Calu3 (cell line): ENCODE measurements at regions of chr18 and their contacts with region 1.

Region 1: DNA sequence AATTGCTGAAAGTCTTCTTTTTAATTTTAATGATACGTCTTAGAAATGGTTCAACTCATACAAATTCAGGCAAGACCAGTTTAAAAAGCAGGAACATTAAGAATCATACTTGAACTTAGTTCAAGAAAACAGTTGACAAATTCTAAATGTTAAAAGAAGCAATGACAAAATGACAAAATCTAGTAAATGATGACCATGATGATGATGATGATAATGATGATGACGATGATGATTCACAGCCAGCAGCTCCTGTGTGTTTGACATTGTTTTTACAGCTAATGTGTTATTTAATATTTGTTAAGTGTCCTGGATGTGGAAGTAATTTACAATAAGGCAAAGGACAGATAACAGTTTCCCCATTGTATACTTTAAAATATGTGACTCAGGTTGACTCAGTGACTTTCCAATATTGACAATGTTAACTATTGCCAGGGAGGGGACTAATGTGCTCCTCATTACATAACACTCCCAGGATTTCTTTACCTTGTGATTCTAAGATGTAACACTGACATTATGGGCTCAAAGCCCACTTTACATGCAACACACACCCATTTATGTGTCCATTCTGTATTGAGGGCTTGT is 602.2 kb downstream of the FBXO15 start:
- DNase-seq: peak; percentile 8
- H3K4me3 Mint-ChIP-seq: no peak overlapping the region
- H3K27ac Mint-ChIP-seq: peak overlapping the region; percentile 92
- H3K4me1 Mint-ChIP-seq: peaks cover 31% of the 10 kb centered on the region
- H3K27me3 Mint-ChIP-seq: no peaks in the 10 kb centered on the region
- CTCF ChIP-seq: no peak

Region 2: GRCh38 chr18:73340135-73340934 is 205.1 kb before region 1 on chr18:
- CTCF ChIA-PET with region 1: no interaction called
- intact Hi-C with region 1: loop called (anchors 1 kb)
- DNase-seq: peak; percentile 65
- H3K4me3 Mint-ChIP-seq: peak overlapping the region; percentile 64
- H3K27ac Mint-ChIP-seq: peak overlapping the region; percentile 94
- H3K4me1 Mint-ChIP-seq: peaks cover 28% of the 10 kb centered on the region
- H3K27me3 Mint-ChIP-seq: no peaks in the 10 kb centered on the region
- CTCF ChIP-seq: no peak

Region 3: GRCh38 chr18:73446502-73446901 is 98.9 kb before region 1 on chr18:
- CTCF ChIA-PET with region 1: no interaction called
- intact Hi-C with region 1: no loop called
- DNase-seq: no peak
- H3K4me3 Mint-ChIP-seq: no peak overlapping the region
- H3K27ac Mint-ChIP-seq: no peak overlapping the region
- H3K4me1 Mint-ChIP-seq: no peaks in the 10 kb centered on the region
- H3K27me3 Mint-ChIP-seq: no peaks in the 10 kb centered on the region
- CTCF ChIP-seq: no peak

Region 4: DNA sequence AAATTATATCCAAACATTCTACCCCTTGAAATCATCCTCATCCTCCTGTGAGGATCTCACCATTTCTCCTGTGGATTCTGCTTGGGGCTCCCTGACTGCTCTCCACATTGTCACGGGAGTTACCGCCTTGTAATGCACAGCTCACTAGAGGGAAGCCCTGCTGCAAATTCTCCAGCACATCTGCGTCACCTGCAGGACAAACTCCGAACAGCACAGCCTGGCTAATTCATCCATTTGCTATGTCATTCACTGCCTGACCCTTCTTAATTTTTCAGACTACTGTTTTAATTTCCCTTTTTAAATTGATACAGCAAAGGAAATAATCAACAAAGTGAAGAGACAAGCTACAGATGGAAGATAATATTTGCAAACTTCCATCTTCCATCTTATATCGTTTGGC is 25.2 kb before region 1 on chr18:
- CTCF ChIA-PET with region 1: no interaction called
- intact Hi-C with region 1: no loop called
- DNase-seq: no peak
- H3K4me3 Mint-ChIP-seq: no peak overlapping the region
- H3K27ac Mint-ChIP-seq: no peak overlapping the region
- H3K4me1 Mint-ChIP-seq: no peaks in the 10 kb centered on the region
- H3K27me3 Mint-ChIP-seq: no peaks in the 10 kb centered on the region
- CTCF ChIP-seq: no peak

Region 5: GRCh38 chr18:73563901-73564472 is 18.6 kb after region 1 on chr18:
- CTCF ChIA-PET with region 1: no interaction called
- intact Hi-C with region 1: loop called (anchors 2 kb)
- DNase-seq: peak; percentile 61
- H3K4me3 Mint-ChIP-seq: no peak overlapping the region
- H3K27ac Mint-ChIP-seq: peak overlapping the region; percentile 95
- H3K4me1 Mint-ChIP-seq: peaks cover 39% of the 10 kb centered on the region
- H3K27me3 Mint-ChIP-seq: no peaks in the 10 kb centered on the region
- CTCF ChIP-seq: no peak

Region 6: GRCh38 chr18:73670536-73670935 is 125.1 kb after region 1 on chr18:
- CTCF ChIA-PET with region 1: no interaction called
- intact Hi-C with region 1: loop called (anchors 2 kb)
- DNase-seq: peak; percentile 52
- H3K4me3 Mint-ChIP-seq: peak overlapping the region; percentile 14
- H3K27ac Mint-ChIP-seq: peak overlapping the region; percentile 63
- H3K4me1 Mint-ChIP-seq: peaks cover 35% of the 10 kb centered on the region
- H3K27me3 Mint-ChIP-seq: no peaks in the 10 kb centered on the region
- CTCF ChIP-seq: no peak